ENCODE measurements at regions of chr5 and their contacts with region 1.

Region 1: GRCh38 chr5:81751009-81751835 is at the start of gene SSBP2:
- DNase-seq: peak; percentile 99
- ATAC-seq: peak; percentile 84
- H3K4me3 Mint-ChIP-seq: peak within 1 kb of the TSS; percentile 95
- H3K27ac Mint-ChIP-seq: peak within 1 kb of the TSS; percentile 97
- H3K4me1 Mint-ChIP-seq: peaks cover 30% of the 10 kb centered on the region
- H3K27me3 Mint-ChIP-seq: no peaks in the 10 kb centered on the region
- CTCF ChIP-seq: no peak
- total RNA-seq, gene SSBP2: 26.2 and 26.4 TPM in 2 replicates

Region 2: GRCh38 chr5:80407735-80408482 is 1343.3 kb before region 1 on chr5 and contains the start of gene ZFYVE16:
- CTCF ChIA-PET with region 1: no interaction called
- POLR2A ChIA-PET with region 1: no interaction called
- intact Hi-C with region 1: loop called (anchors 10 kb)
- DNase-seq: peak; percentile 95
- ATAC-seq: peak; percentile 84
- H3K4me3 Mint-ChIP-seq: peak within 1 kb of the TSS; percentile 91
- H3K27ac Mint-ChIP-seq: peak within 1 kb of the TSS; percentile 95
- H3K4me1 Mint-ChIP-seq: peaks cover 17% of the 10 kb centered on the region
- H3K27me3 Mint-ChIP-seq: no peaks in the 10 kb centered on the region
- CTCF ChIP-seq: no peak
- total RNA-seq, gene ZFYVE16: 19.8 and 21.1 TPM in 2 replicates

Region 3: DNA sequence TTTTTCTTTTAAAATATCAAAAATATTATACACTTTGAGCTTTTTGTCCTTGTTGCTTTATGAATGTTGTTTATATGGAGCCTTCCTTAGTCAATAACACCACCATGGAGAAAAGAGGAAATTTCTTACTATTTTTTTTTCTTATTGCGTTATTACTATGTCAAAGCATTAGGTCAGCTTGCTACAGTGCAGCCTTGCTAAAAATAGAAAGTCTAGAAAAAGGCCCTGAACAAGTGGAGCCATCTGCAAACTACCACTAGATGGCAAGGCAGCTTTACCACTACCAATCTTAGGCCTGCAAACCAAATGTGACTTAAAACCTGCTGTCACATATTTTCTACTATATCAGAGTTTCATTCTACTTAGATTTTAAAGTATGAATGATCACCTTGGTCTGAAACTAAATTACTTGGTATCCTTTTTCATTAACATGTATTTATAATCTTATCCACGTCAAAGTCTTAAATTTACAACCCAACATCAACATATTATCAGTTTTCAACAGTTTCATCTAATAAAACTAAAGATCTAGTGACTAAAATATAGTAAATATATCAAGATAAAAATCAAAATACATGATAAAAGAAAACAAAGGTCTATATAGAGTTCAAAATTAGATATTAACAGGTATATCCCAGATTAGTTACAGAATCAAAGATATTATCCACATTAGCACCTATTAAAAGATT is 244.2 kb before region 1 on chr5:
- CTCF ChIA-PET with region 1: no interaction called
- POLR2A ChIA-PET with region 1: interaction called, 6 read pairs
- intact Hi-C with region 1: loop called (anchors 1 kb)
- DNase-seq: no peak
- ATAC-seq: peak; percentile 100
- H3K4me3 Mint-ChIP-seq: no peak overlapping the region
- H3K27ac Mint-ChIP-seq: no peak overlapping the region
- H3K4me1 Mint-ChIP-seq: peaks cover 6% of the 10 kb centered on the region
- H3K27me3 Mint-ChIP-seq: no peaks in the 10 kb centered on the region
- CTCF ChIP-seq: no peak

Region 4: DNA sequence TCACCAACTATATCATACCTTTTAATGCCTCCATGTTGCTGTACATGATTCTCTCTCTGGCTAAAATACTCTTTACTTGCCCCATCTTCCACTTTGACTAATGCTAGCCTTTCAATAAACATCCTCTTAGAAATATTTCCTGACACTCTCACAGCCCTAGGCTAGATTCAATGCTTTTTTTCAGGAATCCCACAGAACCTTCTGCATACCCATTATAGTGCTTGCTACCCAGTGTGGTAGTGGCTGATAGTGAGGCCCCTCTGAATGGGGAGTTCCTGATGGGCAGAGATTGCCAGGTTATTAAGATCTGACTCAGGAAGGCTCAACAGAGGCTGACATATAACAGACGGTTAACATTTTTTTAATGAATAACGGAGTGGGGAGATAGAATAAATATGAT is 11.9 kb before region 1 on chr5:
- CTCF ChIA-PET with region 1: no interaction called
- POLR2A ChIA-PET with region 1: interaction called, 12 read pairs
- intact Hi-C with region 1: no loop called
- DNase-seq: no peak
- ATAC-seq: no peak
- H3K4me3 Mint-ChIP-seq: no peak overlapping the region
- H3K27ac Mint-ChIP-seq: no peak overlapping the region
- H3K4me1 Mint-ChIP-seq: peaks cover 14% of the 10 kb centered on the region
- H3K27me3 Mint-ChIP-seq: no peaks in the 10 kb centered on the region
- CTCF ChIP-seq: no peak

Region 5: DNA sequence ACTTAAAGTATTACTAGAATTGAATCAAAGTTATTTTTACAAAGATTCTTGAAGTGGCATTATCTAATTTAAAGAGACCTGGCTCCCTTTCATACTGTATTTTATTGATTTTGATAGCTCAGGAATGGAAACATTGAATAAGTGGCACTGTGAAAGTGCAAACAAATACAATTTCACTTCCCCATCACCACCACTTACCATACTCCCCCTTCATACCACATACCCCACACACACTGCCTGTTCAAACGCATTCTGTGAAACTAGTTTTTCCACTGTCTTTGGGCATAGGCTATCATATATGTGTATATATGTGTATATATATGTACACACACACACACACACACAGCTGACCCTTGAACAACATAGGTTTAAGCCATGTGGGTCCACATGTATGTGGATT is 158.5 kb after region 1 on chr5:
- CTCF ChIA-PET with region 1: no interaction called
- POLR2A ChIA-PET with region 1: no interaction called
- intact Hi-C with region 1: loop called (anchors 2 kb)
- DNase-seq: no peak
- ATAC-seq: peak; percentile 90
- H3K4me3 Mint-ChIP-seq: no peak overlapping the region
- H3K27ac Mint-ChIP-seq: peak overlapping the region; percentile 3
- H3K4me1 Mint-ChIP-seq: peaks cover 28% of the 10 kb centered on the region
- H3K27me3 Mint-ChIP-seq: no peaks in the 10 kb centered on the region
- CTCF ChIP-seq: no peak

Region 6: GRCh38 chr5:82225525-82226172 is 474.4 kb after region 1 on chr5:
- CTCF ChIA-PET with region 1: no interaction called
- POLR2A ChIA-PET with region 1: no interaction called
- intact Hi-C with region 1: loop called (anchors 2 kb)
- DNase-seq: peak; percentile 33
- ATAC-seq: peak; percentile 89
- H3K4me3 Mint-ChIP-seq: no peak overlapping the region
- H3K27ac Mint-ChIP-seq: no peak overlapping the region
- H3K4me1 Mint-ChIP-seq: peaks cover 3% of the 10 kb centered on the region
- H3K27me3 Mint-ChIP-seq: no peaks in the 10 kb centered on the region
- CTCF ChIP-seq: peak; percentile 60

Measured in activated B cell treated with CpG ODN at 0.5 μM for 24 hours (primary cell).